ENCODE measurements at regions of chr18 and their contacts with region 1.

Region 1: GRCh38 chr18:24014062-24014985 is at the start of gene TTC39C:
- DNase-seq: no peak
- ATAC-seq: peak; percentile 77
- H3K4me3 ChIP-seq: peak within 1 kb of the TSS; percentile 52 to 79 (median 77)
- H3K27ac ChIP-seq: peak within 1 kb of the TSS; percentile 19
- H3K4me1 ChIP-seq: peaks cover 23% of the 10 kb centered on the region
- H3K27me3 ChIP-seq: peaks cover 0 to 35% of the 10 kb centered on the region in 2 experiments; a peak in 3 of 5 replicates
- CTCF ChIP-seq: no peak
- EP300 ChIP-seq: no peak
- POLR2A ChIP-seq: no peak
- RAD21 ChIP-seq: no peak
- total RNA-seq, gene TTC39C: 25.9 and 28.1 TPM in 2 replicates

Region 2: DNA sequence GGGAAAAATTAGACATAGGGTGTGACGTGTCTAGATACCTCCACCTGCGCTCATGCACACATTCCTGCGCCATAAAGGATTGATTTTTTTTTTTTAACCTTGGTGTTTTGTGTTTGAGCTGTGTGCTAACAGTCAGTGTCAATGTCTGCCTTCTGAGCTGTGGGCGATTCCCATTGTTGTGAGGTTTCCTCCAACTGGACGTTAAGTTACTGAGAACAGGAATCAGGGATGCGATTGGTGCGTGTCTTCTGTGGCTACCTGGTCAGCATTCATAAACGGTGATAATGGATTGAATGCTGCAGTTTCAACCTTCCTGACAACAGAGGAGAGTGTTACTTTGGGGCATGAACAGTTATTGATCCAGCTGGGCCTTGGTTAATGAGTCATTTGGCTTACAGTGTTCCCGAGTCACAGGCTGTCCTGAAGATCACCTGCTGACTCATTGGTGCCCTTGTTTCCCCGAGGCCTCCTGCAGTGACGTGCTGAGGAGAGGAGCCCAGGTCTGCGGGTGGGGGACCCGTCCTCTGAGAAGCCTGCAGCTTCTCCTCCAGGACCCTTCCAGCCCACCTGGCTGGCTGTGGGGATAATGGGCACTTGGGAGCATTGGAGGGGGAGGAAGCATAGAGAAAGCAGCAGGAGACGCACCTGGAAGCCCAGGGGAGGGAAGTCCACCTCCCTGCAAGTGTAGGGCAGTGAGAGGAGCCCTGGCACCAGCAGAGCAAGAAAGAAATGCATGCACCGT is 98.7 kb after region 1 on chr18:
- CTCF ChIA-PET with region 1: no interaction called
- POLR2A ChIA-PET with region 1: interaction called, 10 read pairs
- in situ Hi-C with region 1: no loop called
- intact Hi-C with region 1: no loop called
- DNase-seq: peak; percentile 87
- ATAC-seq: peak; percentile 94
- H3K4me3 ChIP-seq: peak overlapping the region; percentile 17 to 66 (median 41); a peak in 3 of 6 replicates
- H3K27ac ChIP-seq: peak overlapping the region; percentile 86
- H3K4me1 ChIP-seq: peaks cover 56% of the 10 kb centered on the region
- H3K27me3 ChIP-seq: no peaks in the 10 kb centered on the region
- CTCF ChIP-seq: 0 out of 2 replicates have a peak, but pooled peaks have one; percentile 20
- EP300 ChIP-seq: peak; percentile 26 to 70; a peak in 3 of 4 replicates
- POLR2A ChIP-seq: peak; percentile 38 to 63; a peak in 2 of 4 replicates
- RAD21 ChIP-seq: no peak